ENCODE measurements at regions of chr19 and their contacts with region 1.

Region 1: GRCh38 chr19:11346092-11346940 is at the starts of genes CCDC159 and TMEM205:
- DNase-seq: peak; percentile 82 to 99 (median 98)
- ATAC-seq: peak; percentile 98
- H3K4me3 ChIP-seq: peak within 1 kb of the TSS; percentile 75
- H3K4me3 Mint-ChIP-seq: peak within 1 kb of the TSS; percentile 92 to 100 (median 98)
- H3K27ac ChIP-seq: peak within 1 kb of the TSS; percentile 83
- H3K27ac Mint-ChIP-seq: peak within 1 kb of the TSS; percentile 89 to 98 (median 96)
- H3K4me1 ChIP-seq: peaks cover 13 to 14% of the 10 kb centered on the region in 2 donors
- H3K4me1 Mint-ChIP-seq: peaks cover 22 to 39% (median 29%) of the 10 kb centered on the region in 7 donors
- H3K27me3 ChIP-seq: no peaks in the 10 kb centered on the region
- H3K27me3 Mint-ChIP-seq: no peaks in the 10 kb centered on the region
- total RNA-seq, gene CCDC159: 17.6 to 87.4 (median 84.3) TPM
- total RNA-seq, gene TMEM205: 19.5 to 36.7 (median 29.5) TPM

Region 2: DNA sequence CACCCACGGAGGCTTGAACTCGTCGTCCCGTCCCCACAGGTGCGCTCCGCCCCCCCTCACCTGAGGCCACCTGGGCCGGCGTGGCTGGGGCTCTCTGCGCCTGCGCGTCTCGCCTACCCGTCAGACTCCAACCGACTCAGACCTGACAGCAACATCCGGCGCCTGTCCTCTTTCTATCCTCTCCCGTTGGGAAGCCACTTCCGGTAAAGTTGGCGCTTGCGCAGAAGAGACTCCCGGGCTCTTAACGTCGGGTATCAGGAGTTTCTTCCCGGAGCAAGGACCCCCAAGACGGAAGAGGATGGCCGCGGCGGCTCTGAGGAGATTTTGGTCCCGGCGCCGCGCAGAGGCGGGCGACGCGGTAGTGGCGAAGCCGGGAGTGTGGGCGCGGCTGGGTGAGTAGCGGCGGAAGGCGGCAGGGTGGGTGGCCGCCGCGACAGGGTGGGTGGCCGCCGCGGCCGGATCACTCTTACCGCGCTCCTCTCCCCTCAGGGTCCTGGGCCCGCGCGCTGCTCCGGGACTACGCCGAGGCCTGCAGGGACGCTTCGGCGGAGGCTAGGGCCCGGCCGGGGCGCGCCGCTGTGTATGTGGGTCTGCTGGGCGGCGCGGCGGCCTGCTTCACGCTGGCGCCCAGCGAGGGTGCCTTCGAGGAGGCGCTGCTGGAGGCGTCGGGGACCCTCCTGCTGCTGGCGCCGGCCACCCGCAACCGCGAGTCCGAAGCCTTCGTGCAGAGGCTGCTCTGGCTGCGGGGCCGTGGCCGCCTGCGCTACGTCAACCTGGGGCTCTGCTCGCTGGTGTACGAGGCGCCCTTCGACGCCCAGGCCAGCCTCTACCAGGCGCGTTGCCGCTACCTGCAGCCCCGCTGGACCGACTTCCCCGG is 417.6 kb before region 1 on chr19 and contains the starts of genes TIMM29 and YIPF2:
- CTCF ChIA-PET with region 1: no interaction called
- POLR2A ChIA-PET with region 1: no interaction called
- intact Hi-C with region 1: loop called in 1 of 2 experiments (anchors 1 kb)
- DNase-seq: peak; percentile 76 to 92 (median 88)
- ATAC-seq: peak; percentile 91
- H3K4me3 ChIP-seq: peak within 1 kb of the TSS; percentile 89
- H3K4me3 Mint-ChIP-seq: peak within 1 kb of the TSS; percentile 84 to 96 (median 92)
- H3K27ac ChIP-seq: peak within 1 kb of the TSS; percentile 77
- H3K27ac Mint-ChIP-seq: peak within 1 kb of the TSS; percentile 66 to 93 (median 90)
- H3K4me1 ChIP-seq: peaks cover 14 to 16% of the 10 kb centered on the region in 2 donors
- H3K4me1 Mint-ChIP-seq: peaks cover 12 to 33% (median 26%) of the 10 kb centered on the region in 7 donors
- H3K27me3 ChIP-seq: no peaks in the 10 kb centered on the region
- H3K27me3 Mint-ChIP-seq: no peaks in the 10 kb centered on the region
- total RNA-seq, gene TIMM29: 15.8 to 33.4 (median 24.7) TPM
- total RNA-seq, gene YIPF2: 20.5 to 27.9 (median 26.2) TPM

Region 3: GRCh38 chr19:11155373-11156120 is 190.8 kb before region 1 on chr19 and contains the start of gene SPC24:
- CTCF ChIA-PET with region 1: no interaction called
- POLR2A ChIA-PET with region 1: no interaction called
- intact Hi-C with region 1: loop called in 1 of 2 experiments (anchors 1 kb)
- DNase-seq: peak; percentile 70 to 93 (median 90)
- ATAC-seq: peak; percentile 98
- H3K4me3 ChIP-seq: peak within 1 kb of the TSS; percentile 71
- H3K4me3 Mint-ChIP-seq: peak within 1 kb of the TSS; percentile 79 to 94 (median 89)
- H3K27ac ChIP-seq: peak within 1 kb of the TSS; percentile 16
- H3K27ac Mint-ChIP-seq: peak within 1 kb of the TSS; percentile 54 to 92 (median 83)
- H3K4me1 ChIP-seq: peaks cover 6 to 15% of the 10 kb centered on the region in 2 donors
- H3K4me1 Mint-ChIP-seq: peaks cover 7 to 30% (median 15%) of the 10 kb centered on the region in 7 donors
- H3K27me3 ChIP-seq: no peaks in the 10 kb centered on the region
- H3K27me3 Mint-ChIP-seq: no peaks in the 10 kb centered on the region
- total RNA-seq, gene SPC24: 0.56 to 45.4 (median 1.9) TPM